A673 (cell line): ENCODE measurements at regions of chr14 and their contacts with region 1.

Region 1: GRCh38 chr14:22418631-22419030 is 170.4 kb downstream of the DAD1 start:
- DNase-seq: no peak
- H3K4me3 ChIP-seq: no peak overlapping the region
- H3K27ac ChIP-seq: peak overlapping the region; percentile 99
- H3K4me1 ChIP-seq: peaks cover 74% of the 10 kb centered on the region
- H3K27me3 ChIP-seq: no peaks in the 10 kb centered on the region
- CTCF ChIP-seq: no peak

Region 2: GRCh38 chr14:21656980-21657379 is 761.7 kb before region 1 on chr14:
- CTCF ChIA-PET with region 1: no interaction called
- POLR2A ChIA-PET with region 1: interaction called, 4 read pairs
- intact Hi-C with region 1: loop called (anchors 5 kb)
- DNase-seq: peak; percentile 98
- H3K4me3 ChIP-seq: no peak overlapping the region
- H3K27ac ChIP-seq: peak overlapping the region; percentile 100
- H3K4me1 ChIP-seq: peaks cover 84% of the 10 kb centered on the region
- H3K27me3 ChIP-seq: no peaks in the 10 kb centered on the region
- CTCF ChIP-seq: no peak

Region 3: GRCh38 chr14:21723431-21724045 is 695.1 kb before region 1 on chr14:
- CTCF ChIA-PET with region 1: no interaction called
- POLR2A ChIA-PET with region 1: no interaction called
- intact Hi-C with region 1: loop called (anchors 5 kb)
- DNase-seq: peak; percentile 97
- H3K4me3 ChIP-seq: peak overlapping the region; percentile 63
- H3K27ac ChIP-seq: peak overlapping the region; percentile 98
- H3K4me1 ChIP-seq: peaks cover 64% of the 10 kb centered on the region
- H3K27me3 ChIP-seq: no peaks in the 10 kb centered on the region
- CTCF ChIP-seq: peak; percentile 95

Region 4: GRCh38 chr14:22432348-22432976 is 13.8 kb after region 1 on chr14:
- CTCF ChIA-PET with region 1: no interaction called
- POLR2A ChIA-PET with region 1: interaction called, 9 read pairs
- intact Hi-C with region 1: loop called (anchors 2 kb)
- DNase-seq: peak; percentile 98
- H3K4me3 ChIP-seq: peak overlapping the region; percentile 8
- H3K27ac ChIP-seq: peak overlapping the region; percentile 97
- H3K4me1 ChIP-seq: peaks cover 84% of the 10 kb centered on the region
- H3K27me3 ChIP-seq: no peaks in the 10 kb centered on the region
- CTCF ChIP-seq: no peak

Region 5: DNA sequence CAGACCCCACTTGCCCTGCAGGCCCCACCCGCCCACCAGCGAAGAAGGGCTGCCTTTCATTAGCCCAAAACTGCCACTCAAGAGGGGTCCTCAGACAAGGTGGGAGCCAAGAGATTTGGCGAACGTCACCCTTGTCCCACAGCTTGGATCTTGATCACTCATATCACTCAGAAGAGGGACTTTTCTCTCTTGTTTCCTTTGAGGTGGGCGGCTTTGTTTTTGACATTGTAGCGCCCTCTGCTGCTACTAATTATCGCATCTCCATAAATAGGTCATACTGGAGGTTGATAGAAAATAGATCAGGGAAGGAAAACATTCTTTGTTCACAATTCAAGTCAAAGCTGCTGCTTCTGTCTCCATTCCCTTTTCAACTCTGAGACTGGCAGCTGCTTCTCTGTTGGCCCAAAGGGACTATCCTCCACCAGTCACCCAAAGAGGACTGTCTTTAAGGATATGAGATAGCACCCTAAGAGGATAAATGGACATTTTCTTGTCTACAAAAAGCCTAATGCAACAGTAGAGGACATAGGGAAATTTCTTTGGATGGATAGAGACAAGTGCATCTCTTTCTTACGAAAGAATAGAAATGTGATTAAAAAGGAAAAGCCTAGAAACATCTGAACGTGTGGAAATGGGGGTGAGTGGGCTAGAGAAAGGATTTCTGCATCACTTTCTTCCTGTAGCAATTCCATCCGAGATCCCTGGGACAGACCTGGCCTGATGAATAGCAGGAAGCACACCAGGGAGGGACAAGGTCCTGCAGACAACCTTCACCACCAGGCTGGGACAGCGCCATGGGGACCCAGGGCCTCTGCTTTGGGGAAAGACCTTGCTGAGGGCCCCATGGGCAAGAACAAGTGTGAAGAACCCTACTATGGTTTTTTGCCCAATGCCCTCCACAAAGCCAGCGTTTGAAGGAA is 54.6 kb after region 1 on chr14:
- CTCF ChIA-PET with region 1: interaction called, 3 read pairs
- POLR2A ChIA-PET with region 1: interaction called, 3 read pairs
- intact Hi-C with region 1: loop called (anchors 5 kb)
- DNase-seq: peak; percentile 89
- H3K4me3 ChIP-seq: no peak overlapping the region
- H3K27ac ChIP-seq: peak overlapping the region; percentile 80
- H3K4me1 ChIP-seq: peaks cover 94% of the 10 kb centered on the region
- H3K27me3 ChIP-seq: no peaks in the 10 kb centered on the region
- CTCF ChIP-seq: peak; percentile 75

Region 6: DNA sequence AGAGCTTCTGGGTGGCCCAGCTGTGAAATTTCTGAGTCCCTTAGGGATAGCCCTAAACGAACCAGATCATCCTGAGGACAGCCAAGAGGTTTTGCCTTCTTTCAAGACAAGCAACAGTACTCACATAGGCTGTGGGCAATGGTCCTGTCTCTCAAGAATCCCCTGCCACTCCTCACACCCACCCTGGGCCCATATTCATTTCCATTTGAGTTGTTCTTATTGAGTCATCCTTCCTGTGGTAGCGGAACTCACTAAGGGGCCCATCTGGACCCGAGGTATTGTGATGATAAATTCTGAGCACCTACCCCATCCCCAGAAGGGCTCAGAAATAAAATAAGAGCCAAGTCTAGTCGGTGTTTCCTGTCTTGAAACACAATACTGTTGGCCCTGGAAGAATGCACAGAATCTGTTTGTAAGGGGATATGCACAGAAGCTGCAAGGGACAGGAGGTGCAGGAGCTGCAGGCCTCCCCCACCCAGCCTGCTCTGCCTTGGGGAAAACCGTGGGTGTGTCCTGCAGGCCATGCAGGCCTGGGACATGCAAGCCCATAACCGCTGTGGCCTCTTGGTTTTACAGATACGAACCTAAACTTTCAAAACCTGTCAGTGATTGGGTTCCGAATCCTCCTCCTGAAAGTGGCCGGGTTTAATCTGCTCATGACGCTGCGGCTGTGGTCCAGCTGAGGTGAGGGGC is 131.5 kb after region 1 on chr14:
- CTCF ChIA-PET with region 1: no interaction called
- POLR2A ChIA-PET with region 1: no interaction called
- intact Hi-C with region 1: loop called (anchors 5 kb)
- DNase-seq: peak; percentile 97
- H3K4me3 ChIP-seq: no peak overlapping the region
- H3K27ac ChIP-seq: peak overlapping the region; percentile 86
- H3K4me1 ChIP-seq: peaks cover 85% of the 10 kb centered on the region
- H3K27me3 ChIP-seq: no peaks in the 10 kb centered on the region
- CTCF ChIP-seq: no peak

Region 7: DNA sequence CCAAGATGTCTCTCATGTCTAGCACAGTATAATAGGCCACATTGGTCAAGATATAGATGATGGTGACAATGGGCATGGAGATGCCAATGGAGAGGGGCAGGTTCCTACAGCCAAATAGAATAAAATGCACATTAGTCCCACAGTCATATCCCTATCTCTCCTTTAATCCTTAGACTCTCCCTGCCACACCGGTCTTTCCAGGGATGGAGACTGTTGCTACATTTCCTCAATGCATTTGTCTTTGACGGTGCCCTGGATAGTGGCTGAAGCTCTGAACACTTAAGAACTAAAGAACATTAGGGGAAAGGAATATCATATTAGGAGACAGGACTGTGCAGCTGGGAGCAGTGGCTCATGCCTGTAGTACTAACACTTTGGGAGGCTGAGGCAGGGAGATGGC is 357.6 kb after region 1 on chr14:
- CTCF ChIA-PET with region 1: interaction called, 14 read pairs
- POLR2A ChIA-PET with region 1: no interaction called
- intact Hi-C with region 1: no loop called
- DNase-seq: no peak
- H3K4me3 ChIP-seq: no peak overlapping the region
- H3K27ac ChIP-seq: no peak overlapping the region
- H3K4me1 ChIP-seq: peaks cover 4% of the 10 kb centered on the region
- H3K27me3 ChIP-seq: no peaks in the 10 kb centered on the region
- CTCF ChIP-seq: no peak